GM13977 (cell line): ENCODE measurements at regions of chr15 and their contacts with region 1.

Region 1: GRCh38 chr15:57732526-57733331 is 26.2 kb downstream of the POLR2M start:
- DNase-seq: peak; percentile 49
- CTCF ChIP-seq: peak; percentile 90

Region 2: DNA sequence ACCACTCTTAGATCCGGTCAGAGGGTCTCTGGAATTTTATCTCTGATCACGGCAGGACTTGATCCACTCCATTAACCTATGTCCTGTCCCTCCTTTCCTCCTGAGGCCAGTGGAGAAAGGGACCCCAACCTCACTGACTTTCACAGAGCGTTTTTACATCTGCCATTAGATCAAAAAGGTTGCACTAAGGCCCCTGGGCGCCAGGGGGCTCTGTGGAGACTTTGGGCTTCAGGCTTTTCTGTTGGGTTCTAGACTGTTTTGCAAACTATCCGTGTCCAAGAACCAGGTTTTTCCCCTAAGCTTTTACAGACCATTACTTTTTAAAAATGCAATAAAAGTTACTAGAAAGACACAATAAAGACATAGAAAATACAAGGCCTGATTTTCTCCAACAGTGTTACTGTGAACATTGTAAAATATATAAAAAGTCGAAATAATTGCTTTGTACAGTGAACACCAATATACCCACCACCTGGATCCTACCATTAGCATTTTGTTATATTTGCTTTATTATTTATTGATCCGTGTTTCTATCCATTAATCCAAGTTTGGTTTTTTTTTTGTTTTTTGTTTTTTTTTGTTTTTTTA is 133.5 kb after region 1 on chr15:
- in situ Hi-C with region 1: loop called (anchors 25 kb)
- DNase-seq: peak; percentile 40
- CTCF ChIP-seq: peak; percentile 71